ENCODE measurements at regions of chr15 and their contacts with region 1.

Region 1: DNA sequence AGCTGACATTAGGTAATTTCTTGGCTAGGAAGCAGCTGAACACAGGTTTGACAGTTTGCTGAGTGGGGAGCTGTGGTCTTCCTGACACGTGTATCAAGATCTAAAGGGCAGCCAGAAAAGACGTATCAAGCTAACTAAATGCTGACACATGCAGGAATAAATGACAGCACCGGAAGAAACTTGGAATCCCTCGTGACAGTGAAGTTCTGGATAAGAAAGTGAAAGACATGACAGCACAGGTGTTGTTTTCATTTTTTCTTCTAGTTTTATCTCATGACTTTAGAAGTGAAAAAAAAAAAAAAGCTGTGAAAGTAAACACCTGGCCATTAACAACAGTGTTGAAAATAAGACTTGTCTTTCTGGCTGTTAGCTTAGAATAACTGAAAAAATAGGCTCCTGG is 48.7 kb downstream of the FGF7 start:
- DNase-seq: no peak
- H3K27ac ChIP-seq: no peak overlapping the region
- CTCF ChIP-seq: no peak

Region 2: DNA sequence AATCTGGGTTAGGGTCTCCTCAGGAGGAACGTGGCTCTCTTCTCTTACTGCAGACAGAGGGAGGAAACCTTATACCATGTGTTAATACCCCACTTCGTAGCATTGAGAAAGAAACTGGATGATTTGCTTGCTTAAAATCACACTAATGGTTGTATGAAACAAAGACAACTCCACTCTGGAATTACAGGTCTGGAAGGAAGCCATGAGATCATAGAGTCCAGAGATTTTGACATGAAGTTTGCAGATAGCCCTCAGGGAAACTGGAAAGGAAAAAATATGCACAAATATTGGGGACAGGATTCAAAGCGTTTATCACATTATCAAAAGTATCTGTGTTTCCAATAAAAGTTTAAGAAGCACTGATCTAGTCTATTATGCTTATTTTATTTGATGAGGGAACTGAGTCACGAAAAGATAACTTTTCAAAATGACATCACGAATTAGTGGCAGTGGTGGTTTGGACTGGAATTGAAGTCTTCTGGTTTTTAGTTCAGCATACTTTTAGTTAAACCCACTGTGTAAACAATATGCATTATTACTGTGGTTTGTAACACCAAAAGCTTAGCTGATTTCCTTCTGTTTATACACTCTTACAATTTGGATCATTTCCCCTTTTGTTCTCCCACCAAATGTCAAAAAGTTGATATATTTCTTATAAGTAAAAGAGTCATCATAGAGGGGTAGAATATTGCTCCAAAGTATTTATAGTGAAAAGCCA is 31.9 kb before region 1 on chr15:
- CTCF ChIA-PET with region 1: interaction called, 10 read pairs
- POLR2A ChIA-PET with region 1: no interaction called
- DNase-seq: no peak
- H3K27ac ChIP-seq: no peak overlapping the region
- CTCF ChIP-seq: no peak

Region 3: GRCh38 chr15:49876401-49877038 is 404.8 kb after region 1 on chr15:
- CTCF ChIA-PET with region 1: no interaction called
- POLR2A ChIA-PET with region 1: no interaction called
- DNase-seq: no peak
- H3K27ac ChIP-seq: no peak overlapping the region
- CTCF ChIP-seq: no peak

Region 4: DNA sequence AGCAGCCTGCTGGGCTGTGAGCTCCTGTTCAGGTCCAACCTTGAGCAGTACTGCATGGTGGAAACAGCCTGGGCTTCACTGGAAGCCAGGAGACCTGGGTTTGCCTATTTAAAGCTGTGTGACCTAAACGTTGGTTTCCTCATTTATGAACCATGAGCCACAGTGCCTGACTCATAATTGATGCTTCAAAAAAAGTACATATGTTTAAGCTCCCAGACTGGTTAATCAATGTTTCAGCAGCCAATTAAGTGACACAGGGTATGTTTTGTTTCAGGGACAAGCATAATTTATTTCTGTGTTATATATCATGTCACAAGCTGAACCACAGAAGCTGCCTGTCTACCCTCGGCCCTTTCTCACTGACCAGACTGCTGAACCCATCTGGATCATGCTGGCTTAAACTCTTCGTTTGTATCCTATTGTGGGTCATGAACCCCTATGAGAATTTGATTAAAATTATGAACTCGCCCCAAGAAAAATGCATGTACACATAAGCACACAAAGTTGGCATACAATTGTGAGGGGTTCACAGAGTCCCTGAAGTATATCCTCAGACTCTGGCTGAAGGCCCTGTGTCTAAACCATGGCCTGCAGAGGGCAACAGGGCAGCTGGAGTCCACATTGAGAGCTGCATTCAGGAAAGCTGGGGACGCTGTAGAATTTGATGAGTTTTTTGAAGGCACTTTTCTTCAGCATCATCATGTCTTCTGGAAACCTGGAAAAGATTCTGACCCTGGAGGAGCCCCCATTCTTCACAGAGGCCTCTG is 770.1 kb after region 1 on chr15:
- CTCF ChIA-PET with region 1: interaction called, 12 read pairs
- POLR2A ChIA-PET with region 1: no interaction called
- DNase-seq: no peak
- H3K27ac ChIP-seq: no peak overlapping the region
- CTCF ChIP-seq: no peak